Activated CD4-positive, alpha-beta T cell treated with anti-CD3 and anti-CD28 coated beads for 36 hours (primary cell): ENCODE measurements at regions of chr10 and their contacts with region 1.

Region 1: GRCh38 chr10:89332123-89332633 is 4.4 kb downstream of the IFIT3 start:
- DNase-seq: peak; percentile 41
- ATAC-seq: peak; percentile 54
- H3K4me3 Mint-ChIP-seq: peak overlapping the region; percentile 62
- H3K27ac Mint-ChIP-seq: peak overlapping the region; percentile 63
- H3K4me1 Mint-ChIP-seq: peaks cover 79% of the 10 kb centered on the region
- H3K27me3 Mint-ChIP-seq: peaks cover 8% of the 10 kb centered on the region

Region 2: DNA sequence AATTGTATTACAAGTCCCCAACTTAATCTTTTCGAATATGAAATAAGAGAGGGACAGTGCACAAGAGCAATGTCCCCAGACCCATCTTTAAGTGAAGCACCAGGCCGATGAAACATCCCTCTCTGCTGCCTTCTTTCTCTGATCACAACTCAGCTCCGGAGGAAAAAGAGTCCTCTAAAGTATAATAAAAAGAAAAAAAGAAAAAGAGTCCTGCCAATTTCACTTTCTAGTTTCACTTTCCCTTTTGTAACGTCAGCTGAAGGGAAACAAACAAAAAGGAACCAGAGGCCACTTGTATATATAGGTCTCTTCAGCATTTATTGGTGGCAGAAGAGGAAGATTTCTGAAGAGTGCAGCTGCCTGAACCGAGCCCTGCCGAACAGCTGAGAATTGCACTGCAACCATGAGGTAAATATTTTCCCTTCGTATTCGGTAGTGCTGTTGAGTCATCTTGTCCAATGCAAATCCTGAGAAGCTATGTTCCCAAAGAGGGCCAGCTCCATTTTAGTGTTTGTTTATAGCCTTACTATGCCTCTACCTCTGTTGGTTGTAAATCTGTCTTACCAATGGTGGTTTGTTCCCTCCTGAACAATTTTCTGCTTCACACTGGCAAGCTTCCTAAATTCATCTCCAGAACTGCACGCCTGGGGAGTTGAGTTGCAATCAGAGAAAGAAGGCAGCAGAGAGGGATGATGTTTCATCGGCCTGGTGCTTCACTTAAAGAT is 30.3 kb before region 1 on chr10 and contains the start of gene IFIT2:
- CTCF ChIA-PET with region 1: interaction called, 4 read pairs
- POLR2A ChIA-PET with region 1: interaction called, 3 read pairs
- intact Hi-C with region 1: loop called (anchors 1 kb)
- DNase-seq: peak; percentile 50
- ATAC-seq: peak; percentile 74
- H3K4me3 Mint-ChIP-seq: peak within 1 kb of the TSS; percentile 74
- H3K27ac Mint-ChIP-seq: peak within 1 kb of the TSS; percentile 86
- H3K4me1 Mint-ChIP-seq: peaks cover 42% of the 10 kb centered on the region
- H3K27me3 Mint-ChIP-seq: no peaks in the 10 kb centered on the region
- total RNA-seq, gene IFIT2: 38.2 to 43.5 TPM

Region 3: GRCh38 chr10:89351780-89352597 is 19.8 kb after region 1 on chr10:
- CTCF ChIA-PET with region 1: no interaction called
- POLR2A ChIA-PET with region 1: interaction called, 4 read pairs
- intact Hi-C with region 1: loop called in 1 of 2 experiments (anchors 1 kb)
- DNase-seq: no peak
- ATAC-seq: no peak
- H3K4me3 Mint-ChIP-seq: no peak overlapping the region
- H3K27ac Mint-ChIP-seq: no peak overlapping the region
- H3K4me1 Mint-ChIP-seq: peaks cover 28% of the 10 kb centered on the region
- H3K27me3 Mint-ChIP-seq: peaks cover 13% of the 10 kb centered on the region